Left cardiac atrium (tissue), 4 donors: ENCODE measurements at regions of chr4 and their contacts with region 1.

Region 1: GRCh38 chr4:165327211-165328100 is at the start of gene MSMO1:
- DNase-seq: peak; percentile 100
- ATAC-seq: peak; percentile 99
- total RNA-seq, gene MSMO1: 16.8 to 22.9 TPM

Region 2: GRCh38 chr4:165207431-165208220 is 119.8 kb before region 1 on chr4 and contains the start of gene KLHL2:
- intact Hi-C with region 1: loop called in 1 of 2 experiments (anchors 10 kb)
- DNase-seq: peak; percentile 89
- ATAC-seq: peak; percentile 97
- total RNA-seq, gene KLHL2: 11.0 to 14.3 TPM